ENCODE measurements at regions of chr5 and their contacts with region 1.

Region 1: DNA sequence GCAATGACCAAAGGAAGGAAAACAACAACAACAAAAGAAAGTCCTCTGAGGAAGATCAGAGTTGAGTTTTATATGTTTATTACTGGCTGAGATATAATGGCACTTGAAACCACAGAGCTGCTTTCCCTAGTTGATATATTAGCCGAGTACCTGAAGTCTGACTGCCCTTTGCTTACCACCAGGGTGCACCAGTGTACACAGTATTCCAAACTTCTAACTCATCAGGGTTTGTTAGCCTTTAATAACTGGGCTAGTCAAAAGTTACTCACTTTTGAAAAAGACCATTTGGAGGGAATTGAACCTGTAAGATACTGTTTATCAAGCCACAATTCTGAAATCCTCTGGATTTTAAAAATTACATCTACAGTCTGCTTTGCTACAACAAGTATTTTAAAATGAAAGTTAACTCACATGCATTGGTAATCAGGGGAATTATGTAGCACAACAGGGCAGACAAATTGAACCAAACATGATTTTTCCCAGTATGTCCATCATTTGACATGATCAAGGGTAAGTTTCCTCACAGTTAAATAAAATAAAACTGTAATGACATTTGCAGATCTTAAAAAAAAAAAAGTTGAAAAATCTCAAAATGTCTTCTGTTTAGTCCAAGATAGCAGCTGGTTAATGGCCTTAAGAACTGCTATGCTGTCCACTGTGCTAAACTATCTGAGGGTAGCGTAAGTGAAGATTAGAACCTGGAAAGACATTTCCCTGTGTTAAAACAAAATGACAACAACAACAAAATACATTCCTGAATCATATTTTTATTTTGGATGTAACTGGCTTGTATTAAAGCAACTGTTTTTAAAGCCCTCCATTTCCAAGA is 57.3 kb upstream of the C6 start:
- DNase-seq: peak; percentile 60 to 72 (median 66)
- ATAC-seq: peak; percentile 99
- H3K4me3 ChIP-seq: no peak overlapping the region
- H3K27ac ChIP-seq: no peak overlapping the region
- H3K4me1 ChIP-seq: no peaks in the 10 kb centered on the region
- H3K27me3 ChIP-seq: no peaks in the 10 kb centered on the region
- CTCF ChIP-seq: peak; percentile 26 to 87 (median 76)
- POLR2A ChIP-seq: no peak

Region 2: GRCh38 chr5:41427505-41427904 is 156.9 kb after region 1 on chr5:
- intact Hi-C with region 1: no loop called
- DNase-seq: no peak
- ATAC-seq: no peak
- H3K4me3 ChIP-seq: no peak overlapping the region
- H3K27ac ChIP-seq: no peak overlapping the region
- H3K4me1 ChIP-seq: peaks cover 12% of the 10 kb centered on the region
- H3K27me3 ChIP-seq: no peaks in the 10 kb centered on the region
- CTCF ChIP-seq: no peak
- POLR2A ChIP-seq: no peak

Region 3: GRCh38 chr5:41510176-41510831 is 239.7 kb after region 1 on chr5 and contains the start of gene PLCXD3:
- intact Hi-C with region 1: loop called (anchors 10 kb)
- DNase-seq: peak; percentile 41 to 70 (median 53)
- ATAC-seq: peak; percentile 82
- H3K4me3 ChIP-seq: no peak within 1 kb of the TSS
- H3K27ac ChIP-seq: no peak within 1 kb of the TSS
- H3K4me1 ChIP-seq: peaks cover 17% of the 10 kb centered on the region
- H3K27me3 ChIP-seq: peaks cover 0 to 6% of the 10 kb centered on the region in 2 donors
- CTCF ChIP-seq: no peak
- POLR2A ChIP-seq: peak in 2 of 3 donors; percentile 43 to 50
- total RNA-seq, gene PLCXD3: 1.6 to 3.9 TPM

Measured in body of pancreas (tissue), 4 donors.